ENCODE measurements at regions of chr5 and their contacts with region 1.

Region 1: GRCh38 chr5:32151198-32151597 is 22.9 kb downstream of the GOLPH3 start:
- DNase-seq: no peak
- H3K4me3 Mint-ChIP-seq: no peak overlapping the region
- H3K27ac Mint-ChIP-seq: no peak overlapping the region
- H3K4me1 Mint-ChIP-seq: peaks cover 31% of the 10 kb centered on the region
- H3K27me3 Mint-ChIP-seq: no peaks in the 10 kb centered on the region
- CTCF ChIP-seq: no peak

Region 2: DNA sequence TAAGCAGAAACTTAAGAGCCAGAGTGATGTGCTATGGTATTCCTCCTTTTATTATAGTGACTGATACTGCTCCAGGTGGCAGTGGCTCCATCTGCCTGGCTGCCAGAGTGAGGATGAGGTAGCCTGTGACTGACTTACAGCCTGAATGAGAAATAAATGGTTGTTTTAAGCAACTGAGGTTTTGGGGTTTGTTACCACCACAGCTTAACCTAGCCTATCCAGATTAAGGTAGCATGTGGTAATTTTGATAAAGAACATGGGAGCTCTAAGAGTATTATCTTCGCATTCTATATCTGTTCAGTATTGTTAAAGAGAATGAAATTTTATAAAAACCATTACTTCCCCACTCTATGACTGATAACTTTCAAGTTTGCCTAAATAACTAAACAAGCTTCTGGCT is 16.1 kb before region 1 on chr5:
- CTCF ChIA-PET with region 1: interaction called, 14 read pairs
- POLR2A ChIA-PET with region 1: interaction called, 5 read pairs
- intact Hi-C with region 1: no loop called
- DNase-seq: no peak
- H3K4me3 Mint-ChIP-seq: no peak overlapping the region
- H3K27ac Mint-ChIP-seq: no peak overlapping the region
- H3K4me1 Mint-ChIP-seq: no peaks in the 10 kb centered on the region
- H3K27me3 Mint-ChIP-seq: no peaks in the 10 kb centered on the region
- CTCF ChIP-seq: no peak

Region 3: DNA sequence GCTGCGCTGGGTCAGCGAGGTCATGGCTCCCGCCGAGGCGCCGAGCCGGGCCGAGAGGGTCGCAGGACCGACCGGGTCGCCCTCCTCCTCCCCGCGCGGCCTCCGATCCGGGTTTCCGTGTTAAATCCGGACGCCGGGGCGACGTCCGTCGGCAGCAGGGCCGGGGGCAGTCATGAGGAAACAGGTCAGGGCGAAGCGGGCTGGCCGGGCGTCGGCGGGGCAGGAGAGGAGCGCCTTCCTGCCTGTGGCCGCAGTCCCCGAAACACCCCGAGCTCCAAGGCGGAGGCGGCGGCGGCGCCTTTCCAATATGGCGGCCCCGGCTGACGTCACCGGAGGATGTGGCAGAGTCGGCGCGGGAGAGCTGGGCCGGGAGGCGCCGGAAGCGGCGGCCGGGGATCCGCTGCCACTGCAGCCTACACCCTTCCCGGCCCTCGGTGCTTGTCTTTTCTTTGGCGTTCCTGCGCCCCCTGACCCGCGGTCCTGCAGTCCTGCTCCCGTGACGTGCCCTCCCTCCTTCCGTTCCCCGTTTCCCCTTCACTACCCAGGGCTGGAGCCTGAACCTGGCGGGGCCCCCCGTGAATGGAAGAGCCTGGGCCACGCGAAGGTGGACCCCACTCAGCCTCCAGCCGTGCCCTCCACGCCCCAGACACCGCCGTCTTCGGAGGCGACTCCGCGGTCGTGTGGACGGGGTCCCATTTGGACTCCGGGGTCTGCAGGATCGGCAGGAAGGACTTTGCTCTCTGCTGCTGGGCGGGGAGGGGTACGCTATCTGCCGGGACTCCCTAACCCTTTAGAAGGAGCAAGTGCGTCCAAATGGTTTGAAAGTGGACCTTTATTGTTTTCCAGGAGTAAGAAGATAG is 23.0 kb after region 1 on chr5 and contains the start of gene GOLPH3:
- CTCF ChIA-PET with region 1: interaction called, 6 read pairs
- POLR2A ChIA-PET with region 1: interaction called, 23 read pairs
- intact Hi-C with region 1: no loop called
- DNase-seq: peak; percentile 87
- H3K4me3 Mint-ChIP-seq: peak within 1 kb of the TSS; percentile 98
- H3K27ac Mint-ChIP-seq: peak within 1 kb of the TSS; percentile 95
- H3K4me1 Mint-ChIP-seq: peaks cover 28% of the 10 kb centered on the region
- H3K27me3 Mint-ChIP-seq: no peaks in the 10 kb centered on the region
- CTCF ChIP-seq: no peak
- total RNA-seq, gene GOLPH3: 69.5 and 89.6 TPM in 2 replicates

Measured in MCF 10A (cell line).